ENCODE measurements at regions of chr19 and their contacts with region 1.

Region 1: DNA sequence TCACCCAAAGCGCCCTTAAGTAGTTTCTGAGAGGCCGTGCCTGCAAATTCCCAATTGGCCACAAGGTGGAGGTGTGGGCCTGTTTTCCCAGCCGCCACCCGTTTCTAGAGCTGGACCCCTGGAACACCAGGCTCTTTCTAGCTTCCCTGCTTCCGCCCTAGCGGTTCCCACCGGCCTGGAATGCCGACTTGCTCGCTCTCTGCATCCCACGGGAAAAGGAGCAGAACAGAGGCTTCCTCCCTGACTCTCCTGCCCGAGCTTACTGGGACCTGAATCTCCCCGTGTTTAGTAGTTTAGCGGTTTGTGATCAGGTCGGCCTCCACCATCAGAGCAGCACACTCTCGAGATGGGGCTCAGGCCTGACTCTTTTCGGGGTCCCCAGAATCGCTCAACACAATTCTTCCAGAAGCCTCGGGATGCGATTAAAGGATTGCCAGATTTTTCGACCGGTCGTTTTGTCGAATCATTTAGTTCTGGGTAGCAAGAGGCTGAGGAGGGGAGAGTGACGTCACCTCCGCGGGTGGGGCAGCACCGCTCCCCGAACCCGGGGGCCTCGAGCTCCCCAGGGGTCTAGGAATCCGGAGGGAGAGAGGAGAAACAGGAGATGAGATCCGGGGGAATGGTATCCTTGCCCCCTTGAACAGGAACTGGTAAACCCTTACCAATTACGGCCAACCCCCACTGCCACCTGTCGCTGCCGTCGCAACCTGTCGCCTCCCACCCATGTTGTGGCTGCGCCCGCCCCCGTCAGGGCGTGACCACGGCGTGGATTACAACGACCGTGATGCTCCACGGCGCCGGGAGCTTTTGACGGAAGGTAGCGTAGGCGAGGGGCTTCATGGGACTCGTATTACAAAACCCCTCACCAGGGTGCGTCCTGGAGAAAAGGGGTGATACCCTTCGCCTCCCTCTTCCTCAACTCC is 8.0 kb downstream of the NAPSA start:
- DNase-seq: peak; percentile 75 to 79
- ATAC-seq: peak; percentile 77 to 89 (median 80)
- H3K4me3 ChIP-seq: peak overlapping the region; percentile 35 to 67 (median 58)
- H3K27ac ChIP-seq: peak overlapping the region in 9 of 10 donors; percentile 77 to 88 (median 84)
- H3K4me1 ChIP-seq: peaks cover 0 to 16% (median 8%) of the 10 kb centered on the region in 9 donors
- H3K27me3 ChIP-seq: no peaks in the 10 kb centered on the region
- CTCF ChIP-seq: peak; percentile 83 to 94 (median 87)

Region 2: GRCh38 chr19:50198429-50199258 is 158.8 kb before region 1 on chr19:
- intact Hi-C with region 1: no loop called
- DNase-seq: peak in 1 of 2 donors; percentile 58
- ATAC-seq: peak in 7 of 8 donors; percentile 13 to 64 (median 44)
- H3K4me3 ChIP-seq: peak overlapping the region in 1 of 10 donors; percentile 8
- H3K27ac ChIP-seq: peak overlapping the region in 9 of 10 donors; percentile 39 to 84 (median 78)
- H3K4me1 ChIP-seq: peaks cover 4 to 28% (median 13%) of the 10 kb centered on the region in 9 donors
- H3K27me3 ChIP-seq: peaks cover 6 to 34% (median 13%) of the 10 kb centered on the region in 7 donors
- CTCF ChIP-seq: no peak

Region 3: DNA sequence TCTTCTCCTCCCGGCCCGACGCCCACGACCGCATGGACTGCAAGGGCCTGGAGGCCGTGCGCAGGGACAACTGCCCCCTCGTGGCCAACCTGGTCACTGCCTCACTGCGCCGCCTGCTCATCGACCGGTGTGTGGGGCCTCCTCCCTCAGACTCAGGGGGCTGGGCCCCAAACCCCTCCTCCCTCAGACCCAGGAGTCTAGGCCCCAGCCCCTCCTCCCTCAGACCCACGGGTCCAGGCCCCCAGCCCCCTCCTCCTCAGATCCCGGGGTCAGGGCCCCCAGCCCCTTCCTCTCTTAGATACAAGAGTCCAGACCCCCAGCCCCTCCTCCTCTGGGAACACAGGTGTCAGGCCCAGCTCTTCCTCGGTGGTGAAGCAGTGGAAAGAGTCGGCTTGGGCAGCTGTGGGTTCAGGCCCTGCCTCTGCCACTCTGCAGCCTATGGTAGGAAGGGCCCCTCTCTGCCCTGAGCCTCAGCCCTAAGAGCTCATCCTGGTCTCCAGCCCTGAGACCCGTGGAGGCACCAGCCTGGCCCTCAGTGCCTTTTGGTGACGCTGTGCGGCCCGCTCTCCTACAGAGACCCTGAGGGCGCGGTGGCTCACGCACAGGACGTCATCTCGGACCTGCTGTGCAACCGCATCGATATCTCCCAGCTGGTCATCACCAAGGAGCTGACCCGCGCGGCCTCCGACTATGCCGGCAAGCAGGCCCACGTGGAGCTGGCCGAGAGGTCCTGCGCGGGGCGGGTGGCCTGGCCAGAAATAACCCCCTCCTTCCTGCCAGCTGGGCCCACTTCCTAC is 57.6 kb after region 1 on chr19:
- intact Hi-C with region 1: loop called in 2 of 10 experiments (anchors 5 kb)
- DNase-seq: peak; percentile 59 to 80
- ATAC-seq: peak; percentile 75 to 90 (median 81)
- H3K4me3 ChIP-seq: peak overlapping the region in 1 of 10 donors; percentile 20
- H3K27ac ChIP-seq: peak overlapping the region in 1 of 10 donors; percentile 40
- H3K4me1 ChIP-seq: peaks cover 0 to 20% (median 0%) of the 10 kb centered on the region in 9 donors
- H3K27me3 ChIP-seq: peaks cover 8 to 32% (median 29%) of the 10 kb centered on the region in 7 donors
- CTCF ChIP-seq: peak; percentile 63 to 95 (median 89)

Region 4: GRCh38 chr19:50461066-50461875 is 103.8 kb after region 1 on chr19:
- intact Hi-C with region 1: loop called in 1 of 10 experiments (anchors 5 kb)
- DNase-seq: peak; percentile 39 to 44
- ATAC-seq: peak; percentile 56 to 82 (median 76)
- H3K4me3 ChIP-seq: no peak overlapping the region
- H3K27ac ChIP-seq: no peak overlapping the region
- H3K4me1 ChIP-seq: no peaks in the 10 kb centered on the region
- H3K27me3 ChIP-seq: peaks cover 0 to 72% (median 50%) of the 10 kb centered on the region in 7 donors
- CTCF ChIP-seq: peak; percentile 70 to 84 (median 82)

Region 5: GRCh38 chr19:50537762-50538230 is 180.4 kb after region 1 on chr19:
- intact Hi-C with region 1: no loop called
- DNase-seq: peak; percentile 69 to 83
- ATAC-seq: peak; percentile 55 to 89 (median 79)
- H3K4me3 ChIP-seq: no peak overlapping the region
- H3K27ac ChIP-seq: no peak overlapping the region
- H3K4me1 ChIP-seq: peaks cover 0 to 5% (median 0%) of the 10 kb centered on the region in 9 donors
- H3K27me3 ChIP-seq: peaks cover 0 to 9% (median 0%) of the 10 kb centered on the region in 7 donors
- CTCF ChIP-seq: peak; percentile 57 to 83 (median 78)